AG04449 (cell line): ENCODE measurements at regions of chr13 and their contacts with region 1.

Region 1: GRCh38 chr13:30132623-30133553 is 174.5 kb downstream of the KATNAL1 start:
- DNase-seq: peak; percentile 52
- H3K4me3 ChIP-seq: no peak overlapping the region
- CTCF ChIP-seq: peak; percentile 90

Region 2: GRCh38 chr13:29850224-29850898 is 282.5 kb before region 1 on chr13 and contains the start of gene UBL3:
- CTCF ChIA-PET with region 1: interaction called, 16 read pairs
- POLR2A ChIA-PET with region 1: no interaction called
- DNase-seq: peak; percentile 72
- H3K4me3 ChIP-seq: peak within 1 kb of the TSS; percentile 84
- CTCF ChIP-seq: no peak

Region 3: DNA sequence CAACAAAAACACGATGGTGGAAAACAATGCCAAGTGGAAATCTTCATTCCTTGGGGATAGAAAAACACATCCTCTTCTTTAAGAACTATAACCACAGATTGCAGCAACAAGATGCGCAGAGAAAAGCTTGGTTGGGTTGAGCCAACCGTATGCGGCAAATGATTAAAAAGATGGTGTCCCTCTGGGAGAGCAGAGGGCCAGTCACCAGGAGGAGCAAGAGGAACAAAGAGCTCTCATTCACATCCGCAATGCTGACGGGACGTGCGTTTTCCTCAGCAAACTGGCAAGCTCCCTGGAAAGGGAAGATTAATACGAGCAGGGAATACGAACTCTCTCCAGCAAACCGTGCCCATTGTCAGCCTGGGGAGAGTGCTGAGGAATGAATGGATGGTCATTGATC is 32.9 kb after region 1 on chr13:
- CTCF ChIA-PET with region 1: interaction called, 248 read pairs
- POLR2A ChIA-PET with region 1: no interaction called
- DNase-seq: no peak
- H3K4me3 ChIP-seq: no peak overlapping the region
- CTCF ChIP-seq: peak; percentile 14

Region 4: DNA sequence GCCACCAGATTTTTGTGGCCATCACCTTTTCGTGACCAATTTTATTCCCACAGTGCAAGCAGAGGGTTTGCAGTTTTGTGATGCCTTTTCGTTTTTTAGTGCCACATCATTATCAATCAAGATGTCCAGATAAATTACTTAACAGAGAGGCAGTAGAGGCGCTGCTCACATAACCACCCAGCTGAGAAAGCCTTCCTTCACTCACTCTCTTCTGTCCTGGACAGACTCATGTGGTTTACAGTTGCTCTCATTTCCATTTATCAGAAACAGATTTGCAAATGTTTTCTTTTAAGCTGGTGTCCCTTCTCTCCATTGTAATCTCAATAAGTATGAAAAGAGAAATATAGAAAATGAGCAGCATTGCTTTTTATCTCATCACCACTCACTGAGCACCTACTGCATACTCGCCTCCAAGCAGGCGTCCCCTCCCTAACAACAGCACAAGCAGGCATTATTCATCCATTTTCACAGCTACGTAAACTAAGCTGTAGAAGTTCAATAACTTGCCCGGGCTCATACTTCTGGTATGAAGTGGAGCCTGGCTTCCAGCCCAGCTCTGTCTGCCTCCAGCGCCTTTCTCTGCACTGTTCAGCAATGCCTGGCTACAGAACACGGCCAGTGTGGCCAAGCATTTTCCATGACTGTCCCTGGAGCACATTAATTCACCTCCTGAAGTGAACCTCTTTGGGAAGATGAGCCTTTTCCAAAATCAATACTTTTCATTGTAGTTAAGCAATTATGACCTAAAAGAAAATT is 209.1 kb after region 1 on chr13:
- CTCF ChIA-PET with region 1: interaction called, 16 read pairs
- POLR2A ChIA-PET with region 1: no interaction called
- DNase-seq: peak; percentile 72
- H3K4me3 ChIP-seq: no peak overlapping the region
- CTCF ChIP-seq: no peak

Region 5: DNA sequence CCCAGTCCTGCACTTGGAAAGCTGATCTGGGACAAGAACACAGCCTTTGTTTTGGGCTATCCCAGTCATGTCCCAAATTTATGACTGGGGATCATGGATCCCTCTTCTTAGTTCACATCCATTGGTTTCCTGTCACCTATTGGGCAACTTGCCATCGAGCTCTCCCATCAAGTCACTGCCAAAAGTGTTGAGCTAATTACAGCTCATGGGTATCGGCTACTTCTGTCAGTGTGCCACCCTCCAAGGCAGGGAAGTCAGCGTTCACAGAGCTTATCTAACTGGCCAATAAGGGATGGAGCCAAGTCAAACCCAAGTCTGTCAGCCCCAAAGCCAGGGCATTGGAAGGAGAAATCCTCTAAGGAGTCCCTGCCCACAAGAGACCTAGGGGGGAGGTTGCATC is 227.7 kb after region 1 on chr13:
- CTCF ChIA-PET with region 1: no interaction called
- POLR2A ChIA-PET with region 1: no interaction called
- DNase-seq: no peak
- H3K4me3 ChIP-seq: no peak overlapping the region
- CTCF ChIP-seq: no peak

Region 6: DNA sequence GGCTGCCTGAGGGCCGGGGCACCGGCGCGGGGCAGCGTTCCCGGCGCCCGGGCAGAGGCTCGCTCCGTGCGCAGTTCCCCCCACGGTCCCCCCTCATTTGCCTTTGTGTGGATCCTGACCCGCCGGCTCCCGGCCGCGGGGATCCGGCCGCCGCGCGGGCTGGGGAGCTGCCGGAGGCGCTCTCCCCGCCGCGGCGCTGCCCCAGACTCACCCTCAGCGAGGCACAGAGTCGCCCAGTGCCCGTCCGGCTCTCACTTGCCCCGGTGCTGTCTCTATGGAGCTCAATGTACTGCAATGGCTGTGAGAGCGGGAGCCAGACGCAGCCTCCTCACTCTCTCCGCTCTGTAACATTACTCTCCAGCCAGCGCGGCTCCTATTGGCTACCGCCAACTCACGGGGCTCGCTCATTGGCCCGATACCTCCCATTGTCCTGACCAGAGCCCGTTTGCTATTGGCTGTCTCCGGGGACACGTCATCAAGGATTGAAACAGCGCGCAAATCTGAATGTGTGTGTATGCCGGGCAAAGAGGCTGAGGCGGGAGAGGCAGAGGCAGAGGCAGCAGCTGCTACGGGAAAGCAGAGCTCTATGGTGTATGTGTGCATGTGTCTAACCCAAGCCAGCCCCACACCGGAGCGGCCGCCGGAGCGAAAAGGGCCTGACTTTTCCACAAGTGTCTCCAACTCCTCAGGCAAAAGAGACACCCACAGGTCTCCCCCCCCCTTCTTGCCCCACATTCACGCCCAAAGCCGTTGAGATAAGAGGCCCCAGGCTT is 332.9 kb after region 1 on chr13 and contains the start of gene HMGB1:
- CTCF ChIA-PET with region 1: interaction called, 39 read pairs
- POLR2A ChIA-PET with region 1: no interaction called
- DNase-seq: peak; percentile 92
- H3K4me3 ChIP-seq: peak within 1 kb of the TSS; percentile 68
- CTCF ChIP-seq: no peak

Region 7: GRCh38 chr13:31896427-31896826 is 1763.5 kb after region 1 on chr13:
- CTCF ChIA-PET with region 1: no interaction called
- POLR2A ChIA-PET with region 1: no interaction called
- DNase-seq: peak; percentile 54
- H3K4me3 ChIP-seq: no peak overlapping the region
- CTCF ChIP-seq: no peak